ENCODE measurements at regions of chr10 and their contacts with region 1.

Region 1: DNA sequence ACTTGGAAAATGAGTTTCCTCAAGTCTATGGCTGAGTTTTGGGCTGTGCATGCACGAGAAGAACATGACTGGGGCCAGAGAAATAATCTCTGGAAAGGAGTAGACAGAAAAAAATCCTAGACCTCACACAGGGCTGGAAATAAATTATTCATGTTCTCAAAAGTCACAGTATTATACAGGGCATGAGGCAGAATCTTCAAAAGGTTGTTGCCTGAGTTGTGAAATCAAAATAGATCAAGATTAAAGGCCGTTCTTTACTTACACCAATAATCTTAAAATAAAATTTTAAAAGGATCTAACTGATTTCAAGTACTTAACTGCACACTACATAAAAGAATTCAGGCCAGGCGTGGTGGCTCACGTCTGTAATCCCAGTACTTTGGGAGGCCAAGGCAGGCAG is 14.1 kb upstream of the CREM start:
- DNase-seq: no peak
- H3K4me3 ChIP-seq: no peak overlapping the region
- H3K27ac ChIP-seq: no peak overlapping the region
- H3K4me1 ChIP-seq: no peaks in the 10 kb centered on the region
- H3K27me3 ChIP-seq: no peaks in the 10 kb centered on the region
- CTCF ChIP-seq: no peak
- POLR2A ChIP-seq: no peak

Region 2: DNA sequence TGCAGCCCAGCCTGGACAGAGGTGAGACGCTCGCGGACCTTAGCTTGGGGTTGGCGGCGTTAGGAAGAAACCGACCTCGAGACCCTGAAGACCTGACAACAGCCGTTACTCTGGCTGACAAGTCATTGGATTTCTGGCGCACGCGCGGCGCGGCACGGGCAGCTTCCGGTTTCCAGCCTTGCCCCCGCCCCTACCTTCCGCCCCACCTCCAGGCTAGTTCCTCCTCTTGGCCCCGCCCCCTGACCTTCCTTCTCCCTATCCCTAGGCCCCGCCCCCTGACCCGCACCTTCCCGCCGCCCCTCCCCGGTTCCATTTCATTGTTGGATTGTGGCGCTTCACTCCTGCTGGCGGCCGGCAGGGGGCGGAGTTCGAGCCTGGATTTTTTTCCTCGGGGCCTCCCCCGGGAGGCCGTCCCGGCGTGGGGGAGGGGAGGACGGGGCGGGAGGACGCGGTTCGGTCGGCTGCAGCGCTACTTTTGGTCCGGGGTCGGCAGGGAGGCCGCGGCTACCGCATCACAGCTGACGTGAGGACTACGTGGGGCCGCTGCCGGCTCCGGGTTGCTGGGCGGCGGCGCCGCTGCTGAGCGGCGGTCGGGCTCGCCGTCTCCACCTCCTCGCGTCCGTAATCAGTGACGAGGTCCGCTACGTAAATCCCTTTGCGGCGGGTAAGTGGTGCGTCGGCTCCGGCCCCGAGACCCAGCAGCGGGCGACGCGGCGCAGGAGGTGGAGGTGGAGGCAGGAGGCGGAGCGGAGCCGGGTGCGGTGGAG is 14.1 kb after region 1 on chr10 and contains the start of gene CREM:
- intact Hi-C with region 1: no loop called
- DNase-seq: peak; percentile 97 to 100
- H3K4me3 ChIP-seq: peak within 1 kb of the TSS; percentile 73 to 94 (median 81)
- H3K27ac ChIP-seq: peak within 1 kb of the TSS; percentile 99 to 100
- H3K4me1 ChIP-seq: no peaks in the 10 kb centered on the region
- H3K27me3 ChIP-seq: no peaks in the 10 kb centered on the region
- CTCF ChIP-seq: peak; percentile 92 to 98 (median 95)
- POLR2A ChIP-seq: peak; percentile 93
- total RNA-seq, gene CREM: 30.6 to 55.4 (median 41.6) TPM

Region 3: DNA sequence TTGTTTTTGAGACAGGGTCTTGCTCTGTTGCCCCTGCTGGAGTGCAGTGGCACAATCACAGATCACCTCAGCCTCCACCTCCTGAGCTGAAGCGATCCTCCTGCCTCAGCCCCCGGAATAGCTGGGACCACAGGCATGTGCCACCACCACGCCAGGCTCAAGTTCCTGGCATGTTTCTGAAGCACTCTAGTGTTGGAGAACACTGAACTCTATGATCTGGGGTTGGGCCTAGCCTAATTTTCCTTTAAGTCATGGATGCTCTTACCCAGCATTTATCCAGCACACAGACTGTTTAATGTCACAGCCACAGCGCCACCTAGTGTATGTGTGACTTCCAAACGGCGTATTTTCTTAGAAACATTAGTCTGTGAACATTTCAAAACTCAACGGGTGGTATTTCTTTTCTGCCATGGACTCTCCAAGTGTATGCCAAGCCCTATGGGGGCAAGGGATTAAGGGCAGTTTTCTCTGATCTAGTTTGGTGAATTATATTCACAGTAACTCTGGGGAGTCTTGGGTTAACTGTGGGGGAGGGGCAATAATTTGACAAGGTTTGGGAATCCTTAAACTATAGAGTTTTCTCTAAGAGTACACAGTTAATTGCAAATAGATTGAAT is 105.9 kb after region 1 on chr10:
- intact Hi-C with region 1: loop called (anchors 10 kb)
- DNase-seq: peak; percentile 54 to 75
- H3K4me3 ChIP-seq: no peak overlapping the region
- H3K27ac ChIP-seq: peak overlapping the region in 1 of 2 donors; percentile 53
- H3K4me1 ChIP-seq: no peaks in the 10 kb centered on the region
- H3K27me3 ChIP-seq: no peaks in the 10 kb centered on the region
- CTCF ChIP-seq: peak; percentile 56 to 86 (median 75)
- POLR2A ChIP-seq: no peak

Measured in breast epithelium (tissue), 4 donors.